ENCODE measurements at regions of chr1 and their contacts with region 1.

Region 1: DNA sequence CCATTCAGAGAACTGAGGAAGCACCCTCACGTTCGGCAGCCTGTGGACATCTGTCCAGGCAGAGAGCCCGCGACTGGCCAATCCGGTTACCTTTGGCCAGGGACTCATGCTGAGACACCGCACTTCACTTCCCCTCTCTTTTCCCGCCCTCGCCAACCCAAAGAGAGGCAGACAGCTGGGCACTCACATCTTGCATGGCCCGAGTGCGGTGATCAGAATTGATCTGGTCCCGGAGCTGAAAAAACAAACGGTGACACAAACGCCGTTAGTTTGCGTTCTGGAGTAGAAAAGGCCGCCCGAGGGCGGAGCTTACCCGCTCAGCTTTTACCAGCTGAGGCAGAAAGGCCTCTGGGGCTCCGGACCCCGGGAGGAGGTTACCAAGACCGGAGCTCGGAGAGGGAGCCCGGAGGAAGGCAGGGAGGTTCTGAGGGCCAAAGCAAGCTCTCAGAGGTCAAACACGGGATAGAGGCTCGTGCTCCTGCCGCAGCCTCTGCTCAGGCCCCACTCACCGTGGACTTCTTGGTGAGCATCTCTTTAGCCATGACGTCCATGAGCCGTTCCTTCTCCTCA is 376 bp downstream of the SF3A3 start:
- DNase-seq: no peak
- ATAC-seq: peak; percentile 52
- H3K4me3 ChIP-seq: peak overlapping the region; percentile 87 to 98
- H3K27ac ChIP-seq: peak overlapping the region; percentile 66
- H3K4me1 ChIP-seq: peaks cover 5 to 13% of the 10 kb centered on the region in 2 experiments; a peak in 3 of 4 replicates
- H3K27me3 ChIP-seq: no peaks in the 10 kb centered on the region
- CTCF ChIP-seq: no peak
- POLR2A ChIP-seq: no peak
- RAD21 ChIP-seq: no peak

Region 2: GRCh38 chr1:38012363-38013226 is 23.1 kb after region 1 on chr1 and contains the start of gene UTP11:
- CTCF ChIA-PET with region 1: interaction called, 4 read pairs
- POLR2A ChIA-PET with region 1: interaction called, 3 read pairs
- RAD21 ChIA-PET with region 1: no interaction called
- intact Hi-C with region 1: loop called (anchors 1 kb)
- DNase-seq: peak; percentile 100
- ATAC-seq: peak; percentile 95
- H3K4me3 ChIP-seq: peak within 1 kb of the TSS; percentile 89 to 95
- H3K27ac ChIP-seq: peak within 1 kb of the TSS; percentile 84
- H3K4me1 ChIP-seq: peaks cover 16 to 34% of the 10 kb centered on the region in 2 experiments; a peak in 3 of 4 replicates
- H3K27me3 ChIP-seq: no peaks in the 10 kb centered on the region
- CTCF ChIP-seq: no peak
- POLR2A ChIP-seq: peak; percentile 77
- RAD21 ChIP-seq: no peak
- total RNA-seq, gene UTP11: 47.5 TPM

Region 3: GRCh38 chr1:38046884-38047602 is 57.6 kb after region 1 on chr1:
- CTCF ChIA-PET with region 1: no interaction called
- POLR2A ChIA-PET with region 1: no interaction called
- RAD21 ChIA-PET with region 1: no interaction called
- intact Hi-C with region 1: no loop called
- DNase-seq: peak; percentile 38
- ATAC-seq: peak; percentile 96
- H3K4me3 ChIP-seq: peak overlapping the region; percentile 42 to 56
- H3K27ac ChIP-seq: no peak overlapping the region; the same call in 1 of the 2 replicates
- H3K4me1 ChIP-seq: peaks cover 0 to 10% of the 10 kb centered on the region in 2 experiments; a peak in 1 of 4 replicates
- H3K27me3 ChIP-seq: no peaks in the 10 kb centered on the region
- CTCF ChIP-seq: no peak
- POLR2A ChIP-seq: no peak
- RAD21 ChIP-seq: 0 out of 2 replicates have a peak, but pooled peaks have one; percentile 14

Region 4: GRCh38 chr1:38834937-38835827 is 845.7 kb after region 1 on chr1:
- CTCF ChIA-PET with region 1: no interaction called
- POLR2A ChIA-PET with region 1: no interaction called
- RAD21 ChIA-PET with region 1: no interaction called
- intact Hi-C with region 1: loop called (anchors 1 kb)
- DNase-seq: peak; percentile 81
- ATAC-seq: peak; percentile 97
- H3K4me3 ChIP-seq: no peak overlapping the region
- H3K27ac ChIP-seq: no peak overlapping the region
- H3K4me1 ChIP-seq: no peaks in the 10 kb centered on the region
- H3K27me3 ChIP-seq: no peaks in the 10 kb centered on the region
- CTCF ChIP-seq: peak; percentile 68 to 86 (median 70)
- POLR2A ChIP-seq: no peak
- RAD21 ChIP-seq: peak; percentile 92

Measured in HCT116 (cell line).